H1 (cell line): ENCODE measurements at regions of chr13 and their contacts with region 1.

Region 1: GRCh38 chr13:79393564-79394249 is 12.3 kb downstream of the RBM26 start:
- DNase-seq: no peak
- H3K4me3 ChIP-seq: no peak overlapping the region
- H3K27ac ChIP-seq: no peak overlapping the region
- H3K4me1 ChIP-seq: peaks cover 0 to 4% (median 0%) of the 10 kb centered on the region in 4 experiments; a peak in 1 of 7 replicates
- H3K27me3 ChIP-seq: no peaks in the 10 kb centered on the region
- CTCF ChIP-seq: no peak
- EP300 ChIP-seq: no peak
- POLR2A ChIP-seq: no peak
- RAD21 ChIP-seq: no peak

Region 2: DNA sequence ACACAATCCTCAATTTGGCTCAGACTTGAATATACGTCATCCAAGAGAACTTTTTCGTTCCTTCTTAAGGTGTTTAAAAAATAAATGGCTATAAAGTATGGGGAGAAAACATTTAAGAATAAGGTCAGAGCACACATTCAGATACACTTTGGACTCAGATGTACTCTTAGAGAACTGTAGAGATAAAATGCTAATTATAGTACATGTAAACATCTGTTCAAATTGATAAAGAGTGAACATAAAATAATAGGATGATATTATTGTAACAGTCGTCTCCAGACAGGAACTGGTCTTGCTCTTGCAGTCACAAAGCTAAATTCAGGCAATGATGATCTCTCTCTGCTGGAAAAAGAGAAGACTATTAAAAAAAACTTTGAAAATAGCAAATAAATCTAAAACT is 79.1 kb before region 1 on chr13:
- CTCF ChIA-PET with region 1: no interaction called
- POLR2A ChIA-PET with region 1: no interaction called
- DNase-seq: no peak
- H3K4me3 ChIP-seq: no peak overlapping the region
- H3K27ac ChIP-seq: no peak overlapping the region
- H3K4me1 ChIP-seq: no peaks in the 10 kb centered on the region
- H3K27me3 ChIP-seq: no peaks in the 10 kb centered on the region
- CTCF ChIP-seq: no peak
- EP300 ChIP-seq: no peak
- POLR2A ChIP-seq: no peak
- RAD21 ChIP-seq: no peak

Region 3: DNA sequence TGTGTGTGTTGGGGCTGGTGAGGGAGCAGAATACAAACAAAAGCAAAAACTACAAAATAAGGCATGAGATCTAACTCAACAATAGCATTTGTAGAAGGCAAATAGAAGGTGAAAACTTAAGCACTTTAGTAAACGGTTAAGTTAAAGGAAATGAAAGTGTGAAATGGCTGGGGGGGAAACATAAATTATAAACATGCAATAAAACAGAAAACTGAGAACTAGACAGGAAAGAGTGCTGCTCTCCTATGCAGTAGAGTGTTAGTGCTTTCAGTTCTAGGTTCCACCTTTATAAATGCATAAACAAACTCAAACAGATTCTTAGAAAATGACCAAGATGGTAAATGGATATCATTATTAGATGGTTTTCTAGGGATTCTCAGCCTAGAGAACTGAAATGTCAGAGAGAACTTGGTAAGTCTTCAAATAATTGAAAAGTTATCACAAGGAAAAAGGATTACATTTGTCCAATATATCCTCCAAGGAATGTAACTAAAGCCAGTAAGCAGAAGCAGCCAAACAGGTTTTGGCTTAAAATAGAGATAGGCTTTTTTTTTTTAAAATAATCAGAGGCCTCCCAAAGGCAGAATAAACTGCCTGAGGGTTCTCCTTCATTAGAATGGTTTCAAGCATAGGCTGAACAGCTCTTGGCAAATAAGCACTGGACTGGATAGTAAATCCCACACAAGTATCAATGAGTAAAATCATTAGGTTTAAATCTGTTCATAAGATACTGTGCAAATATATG is 11.0 kb before region 1 on chr13:
- CTCF ChIA-PET with region 1: interaction called, 14 read pairs
- POLR2A ChIA-PET with region 1: no interaction called
- DNase-seq: no peak
- H3K4me3 ChIP-seq: no peak overlapping the region
- H3K27ac ChIP-seq: no peak overlapping the region
- H3K4me1 ChIP-seq: peaks cover 0 to 5% (median 1%) of the 10 kb centered on the region in 4 experiments; a peak in 4 of 7 replicates
- H3K27me3 ChIP-seq: no peaks in the 10 kb centered on the region
- CTCF ChIP-seq: no peak
- EP300 ChIP-seq: no peak
- POLR2A ChIP-seq: no peak
- RAD21 ChIP-seq: no peak